ENCODE measurements at regions of chr1 and their contacts with region 1.

Region 1: DNA sequence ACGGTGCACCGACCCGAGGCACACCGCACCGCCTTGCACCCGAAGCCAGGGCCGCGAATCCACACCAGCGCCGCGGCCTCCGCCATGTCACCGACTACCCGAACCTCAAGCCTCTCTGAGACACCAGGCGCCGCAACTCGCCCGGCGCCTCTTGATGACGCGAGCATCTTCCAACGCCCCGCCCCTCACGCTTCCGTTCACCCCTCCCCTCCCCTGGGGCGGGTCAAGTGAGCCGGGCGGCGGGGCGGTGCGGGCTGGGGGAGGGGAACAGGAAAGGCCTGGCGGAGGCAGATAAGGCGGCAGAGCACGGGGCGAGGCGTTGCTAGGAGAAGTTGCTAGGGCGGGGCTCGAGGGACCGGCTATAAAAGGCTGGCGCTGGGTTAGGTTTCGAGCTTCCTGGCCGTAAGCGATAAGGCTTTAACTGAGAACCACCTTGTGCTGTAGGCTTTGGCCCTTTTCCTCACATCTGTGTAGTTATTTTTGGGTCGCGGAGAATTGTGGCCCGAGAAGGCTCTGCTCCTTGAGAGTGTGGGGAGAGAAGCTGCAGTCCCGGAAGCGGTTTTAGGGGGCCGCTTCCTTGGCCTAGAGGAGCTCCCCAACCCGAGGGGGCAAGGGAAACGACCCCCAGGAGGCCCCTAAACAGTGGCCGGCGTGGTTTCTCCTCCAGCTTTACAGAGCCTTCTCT is at the start of gene SDE2:
- DNase-seq: peak; percentile 99 to 100 (median 100)
- ATAC-seq: peak; percentile 80
- H3K4me3 ChIP-seq: peak within 1 kb of the TSS; percentile 82 to 92
- H3K4me3 Mint-ChIP-seq: peak within 1 kb of the TSS; percentile 100
- H3K27ac ChIP-seq: peak within 1 kb of the TSS; percentile 99
- H3K27ac Mint-ChIP-seq: peak within 1 kb of the TSS; percentile 100
- H3K4me1 ChIP-seq: peaks cover 88% of the 10 kb centered on the region
- H3K4me1 Mint-ChIP-seq: peaks cover 79% of the 10 kb centered on the region
- H3K27me3 ChIP-seq: no peaks in the 10 kb centered on the region
- H3K27me3 Mint-ChIP-seq: no peaks in the 10 kb centered on the region
- CTCF ChIP-seq: no peak
- total RNA-seq, gene SDE2: 53.3 to 55.3 TPM

Region 2: DNA sequence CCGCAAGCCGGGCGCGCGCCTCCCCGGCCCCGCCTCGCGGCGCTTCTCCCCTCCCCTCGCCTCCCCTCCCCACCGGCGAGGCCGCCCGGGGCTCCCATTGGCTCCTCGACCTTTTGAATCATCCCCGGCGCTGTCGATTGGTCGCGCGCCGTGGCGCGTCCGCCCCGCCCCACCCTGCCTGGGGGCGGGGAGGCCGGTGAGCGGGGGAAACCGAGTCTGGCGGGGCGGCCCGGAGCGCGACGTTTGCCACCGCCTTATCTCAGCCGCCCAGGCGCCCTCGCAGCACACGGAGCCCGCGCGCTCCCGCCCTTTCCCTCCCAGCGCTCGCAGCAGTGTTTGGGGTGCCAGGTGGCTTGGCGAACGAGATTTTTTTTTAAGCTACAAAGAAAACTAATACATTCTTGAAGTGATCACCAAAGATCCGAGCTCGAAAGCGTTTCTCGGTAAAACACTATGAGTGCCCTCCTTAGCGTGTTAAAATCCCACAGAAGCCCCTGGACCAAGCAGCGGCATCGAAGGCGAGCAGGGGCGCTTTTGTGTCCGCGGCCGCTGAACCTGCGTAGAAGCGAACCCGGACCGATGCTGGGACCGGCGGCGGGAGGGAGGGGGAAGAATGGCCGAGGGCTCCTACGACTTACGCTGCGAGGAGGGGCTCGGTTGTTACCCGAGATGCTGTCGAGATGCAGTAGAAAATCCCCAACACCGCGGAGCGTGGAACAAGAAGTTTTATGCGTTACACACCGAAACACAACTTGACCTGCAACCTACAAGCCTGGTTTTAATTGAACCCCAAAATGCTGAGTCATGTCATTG is 571.1 kb before region 1 on chr1:
- CTCF ChIA-PET with region 1: no interaction called
- POLR2A ChIA-PET with region 1: interaction called, 9 read pairs
- intact Hi-C with region 1: loop called (anchors 1 kb)
- DNase-seq: peak; percentile 80 to 96 (median 91)
- ATAC-seq: peak; percentile 92
- H3K4me3 ChIP-seq: peak overlapping the region; percentile 80 to 89
- H3K4me3 Mint-ChIP-seq: peak overlapping the region; percentile 93
- H3K27ac ChIP-seq: peak overlapping the region; percentile 69 to 70
- H3K27ac Mint-ChIP-seq: peak overlapping the region; percentile 91
- H3K4me1 ChIP-seq: peaks cover 39% of the 10 kb centered on the region
- H3K4me1 Mint-ChIP-seq: peaks cover 44% of the 10 kb centered on the region
- H3K27me3 ChIP-seq: no peaks in the 10 kb centered on the region
- H3K27me3 Mint-ChIP-seq: no peaks in the 10 kb centered on the region
- CTCF ChIP-seq: no peak

Region 3: DNA sequence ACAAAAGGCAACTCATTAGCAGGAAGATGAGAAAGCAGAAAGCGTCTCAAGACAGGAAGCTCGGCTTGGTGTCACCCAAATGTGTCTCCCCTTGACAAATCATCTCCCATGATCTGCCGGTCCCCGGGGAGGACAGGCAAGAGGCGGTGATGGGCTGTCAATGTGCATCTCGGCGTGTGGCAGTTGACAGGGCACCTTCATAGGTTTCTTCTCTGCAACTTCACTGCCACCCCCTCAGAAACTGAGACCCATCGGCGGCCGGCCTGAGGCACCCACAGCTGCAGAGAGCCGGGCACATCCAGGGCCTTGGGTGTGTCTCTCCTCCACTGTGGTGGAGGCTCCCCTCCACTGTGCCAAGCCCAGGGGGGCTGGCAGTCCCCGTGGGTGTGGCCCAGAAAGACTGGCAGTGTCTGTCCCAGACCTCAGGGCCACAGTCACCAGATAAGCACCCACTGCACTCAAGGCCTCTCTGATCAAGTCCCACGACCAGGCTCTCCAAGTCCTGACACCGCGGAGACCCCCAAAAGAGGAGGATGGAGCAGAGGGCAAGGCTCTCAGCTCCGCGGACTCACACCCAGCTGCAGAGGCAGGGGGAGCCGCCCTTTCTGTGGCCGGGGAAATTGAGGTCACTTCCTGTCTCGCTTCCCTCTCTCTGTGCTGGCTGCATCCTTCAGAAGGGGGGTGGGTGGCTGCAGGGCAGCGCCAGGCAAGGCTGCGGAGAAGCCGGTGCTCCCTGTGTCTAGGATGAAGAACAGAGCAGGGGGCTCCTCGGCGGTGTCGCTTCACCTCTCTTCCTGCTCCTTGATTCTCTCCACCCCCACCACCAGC is 532.0 kb before region 1 on chr1:
- CTCF ChIA-PET with region 1: no interaction called
- POLR2A ChIA-PET with region 1: interaction called, 13 read pairs
- intact Hi-C with region 1: loop called in 1 of 2 experiments (anchors 1 kb)
- DNase-seq: peak; percentile 67 to 93 (median 86)
- ATAC-seq: peak; percentile 81
- H3K4me3 ChIP-seq: peak overlapping the region; percentile 60 to 86
- H3K4me3 Mint-ChIP-seq: peak overlapping the region; percentile 92
- H3K27ac ChIP-seq: peak overlapping the region; percentile 88 to 95
- H3K27ac Mint-ChIP-seq: peak overlapping the region; percentile 98
- H3K4me1 ChIP-seq: peaks cover 35% of the 10 kb centered on the region
- H3K4me1 Mint-ChIP-seq: peaks cover 43% of the 10 kb centered on the region
- H3K27me3 ChIP-seq: no peaks in the 10 kb centered on the region
- H3K27me3 Mint-ChIP-seq: no peaks in the 10 kb centered on the region
- CTCF ChIP-seq: no peak

Region 4: GRCh38 chr1:225896937-225897549 is 102.3 kb before region 1 on chr1:
- CTCF ChIA-PET with region 1: no interaction called
- POLR2A ChIA-PET with region 1: interaction called, 12 read pairs
- intact Hi-C with region 1: no loop called
- DNase-seq: peak; percentile 46 to 96 (median 71)
- ATAC-seq: peak; percentile 90
- H3K4me3 ChIP-seq: peak overlapping the region; percentile 18 to 38
- H3K4me3 Mint-ChIP-seq: peak overlapping the region; percentile 74
- H3K27ac ChIP-seq: peak overlapping the region; percentile 72 to 80
- H3K27ac Mint-ChIP-seq: peak overlapping the region; percentile 99
- H3K4me1 ChIP-seq: peaks cover 42% of the 10 kb centered on the region
- H3K4me1 Mint-ChIP-seq: peaks cover 56% of the 10 kb centered on the region
- H3K27me3 ChIP-seq: no peaks in the 10 kb centered on the region
- H3K27me3 Mint-ChIP-seq: no peaks in the 10 kb centered on the region
- CTCF ChIP-seq: no peak

Region 5: DNA sequence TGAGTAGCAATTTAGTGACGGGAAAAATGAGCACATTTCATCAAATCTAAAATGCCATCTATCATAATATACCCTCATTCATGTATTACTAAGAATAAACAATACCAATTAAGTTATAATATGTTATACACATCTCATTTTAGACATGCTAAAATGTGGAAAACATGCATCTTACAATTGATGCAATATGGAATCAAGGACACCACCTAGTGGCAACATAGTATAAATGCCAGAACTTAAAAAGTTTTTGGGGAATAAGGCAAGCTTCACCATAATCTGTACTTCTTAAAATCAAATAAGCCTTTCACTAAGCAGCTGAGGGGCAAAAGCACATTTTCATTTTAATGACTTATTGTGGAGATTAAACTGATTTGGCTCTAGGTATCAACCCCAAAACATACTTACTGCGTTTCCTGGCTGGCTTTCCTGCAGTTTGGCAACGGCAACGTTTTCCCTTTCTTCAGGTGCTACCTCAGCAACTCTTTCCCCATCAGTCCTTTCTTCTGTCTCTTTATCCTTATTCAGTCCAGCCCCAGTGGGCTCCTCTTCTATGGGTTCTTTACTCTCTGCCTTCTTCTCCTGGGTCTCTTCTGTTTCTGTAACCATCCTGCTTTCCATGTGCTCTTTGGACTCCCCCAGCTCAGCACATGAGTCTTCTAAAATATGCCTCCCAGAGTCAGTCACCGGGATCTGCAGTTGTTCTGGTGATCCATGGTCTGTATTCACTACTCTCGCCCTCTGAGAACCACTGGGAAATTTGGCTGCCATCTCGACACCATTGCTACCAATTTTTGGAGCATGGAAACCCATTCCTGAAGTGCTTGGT is 11.7 kb before region 1 on chr1:
- CTCF ChIA-PET with region 1: interaction called, 18 read pairs
- POLR2A ChIA-PET with region 1: interaction called, 6 read pairs
- intact Hi-C with region 1: no loop called
- DNase-seq: peak in 2 of 9 experiments; percentile 53 to 66
- ATAC-seq: peak; percentile 79
- H3K4me3 ChIP-seq: no peak overlapping the region
- H3K4me3 Mint-ChIP-seq: no peak overlapping the region
- H3K27ac ChIP-seq: no peak overlapping the region
- H3K27ac Mint-ChIP-seq: peak overlapping the region; percentile 30
- H3K4me1 ChIP-seq: peaks cover 9% of the 10 kb centered on the region
- H3K4me1 Mint-ChIP-seq: peaks cover 28% of the 10 kb centered on the region
- H3K27me3 ChIP-seq: no peaks in the 10 kb centered on the region
- H3K27me3 Mint-ChIP-seq: no peaks in the 10 kb centered on the region
- CTCF ChIP-seq: peak; percentile 74

Region 6: GRCh38 chr1:226186124-226187018 is 187.0 kb after region 1 on chr1 and contains the start of gene ACBD3:
- CTCF ChIA-PET with region 1: no interaction called
- POLR2A ChIA-PET with region 1: no interaction called
- intact Hi-C with region 1: loop called (anchors 1 to 5 kb)
- DNase-seq: peak; percentile 67 to 95 (median 87)
- ATAC-seq: peak; percentile 97
- H3K4me3 ChIP-seq: peak within 1 kb of the TSS; percentile 82 to 90
- H3K4me3 Mint-ChIP-seq: peak within 1 kb of the TSS; percentile 92
- H3K27ac ChIP-seq: peak within 1 kb of the TSS; percentile 72 to 88
- H3K27ac Mint-ChIP-seq: peak within 1 kb of the TSS; percentile 95
- H3K4me1 ChIP-seq: peaks cover 41% of the 10 kb centered on the region
- H3K4me1 Mint-ChIP-seq: peaks cover 40% of the 10 kb centered on the region
- H3K27me3 ChIP-seq: no peaks in the 10 kb centered on the region
- H3K27me3 Mint-ChIP-seq: no peaks in the 10 kb centered on the region
- CTCF ChIP-seq: no peak
- total RNA-seq, gene ACBD3: 40.9 to 41.4 TPM

Region 7: GRCh38 chr1:226940029-226940805 is 940.8 kb after region 1 on chr1 and contains the start of gene COQ8A:
- CTCF ChIA-PET with region 1: no interaction called
- POLR2A ChIA-PET with region 1: no interaction called
- intact Hi-C with region 1: loop called (anchors 5 kb)
- DNase-seq: peak; percentile 97 to 100 (median 99)
- ATAC-seq: peak; percentile 90
- H3K4me3 ChIP-seq: peak within 1 kb of the TSS; percentile 92 to 93
- H3K4me3 Mint-ChIP-seq: peak within 1 kb of the TSS; percentile 88
- H3K27ac ChIP-seq: peak within 1 kb of the TSS; percentile 93 to 97
- H3K27ac Mint-ChIP-seq: peak within 1 kb of the TSS; percentile 97
- H3K4me1 ChIP-seq: peaks cover 38% of the 10 kb centered on the region
- H3K4me1 Mint-ChIP-seq: peaks cover 49% of the 10 kb centered on the region
- H3K27me3 ChIP-seq: no peaks in the 10 kb centered on the region
- H3K27me3 Mint-ChIP-seq: no peaks in the 10 kb centered on the region
- CTCF ChIP-seq: no peak
- total RNA-seq, gene COQ8A: 82.6 to 90.0 TPM